Upper lobe of right lung (tissue), 1 donor: ENCODE measurements at regions of chr12 and their contacts with region 1.

Region 1: GRCh38 chr12:69254046-69254445 is 14.7 kb downstream of the CPSF6 start:
- DNase-seq: no peak
- ATAC-seq: peak; percentile 89
- H3K4me3 ChIP-seq: no peak overlapping the region
- H3K27ac ChIP-seq: no peak overlapping the region
- H3K4me1 ChIP-seq: peaks cover 7% of the 10 kb centered on the region
- H3K27me3 ChIP-seq: no peaks in the 10 kb centered on the region
- CTCF ChIP-seq: peak; percentile 71

Region 2: DNA sequence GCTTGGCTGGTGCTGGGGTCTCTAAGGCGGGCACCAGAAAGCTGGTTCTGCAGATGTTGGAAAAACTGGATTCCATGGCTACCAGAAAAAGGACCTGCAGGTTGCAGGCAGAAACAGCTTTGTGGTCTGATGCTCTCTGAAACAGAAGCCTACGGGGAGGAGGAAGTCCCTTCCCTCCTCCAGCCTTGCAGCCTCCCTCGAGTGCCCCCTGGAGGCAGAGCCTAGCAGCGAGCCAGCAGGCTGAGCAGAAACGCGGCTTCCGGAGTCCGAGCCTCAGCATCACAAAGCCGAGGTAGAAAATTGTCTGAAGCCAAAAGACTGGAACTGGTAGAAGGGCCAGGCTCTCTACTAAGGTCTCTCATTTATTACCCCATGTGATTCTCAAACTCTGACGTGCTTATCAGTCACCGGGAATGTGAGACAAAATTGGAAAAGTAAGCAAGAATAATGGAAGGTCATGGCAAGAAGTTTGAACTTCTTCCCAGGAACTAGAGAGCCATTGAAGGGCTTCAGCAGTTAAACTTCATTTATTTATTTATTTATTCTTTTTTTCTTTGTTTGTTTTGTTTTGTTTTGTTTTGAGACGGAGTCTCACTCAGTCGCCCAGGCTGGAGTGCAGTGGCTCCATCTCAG is 96.9 kb before region 1 on chr12:
- intact Hi-C with region 1: loop called (anchors 5 kb)
- DNase-seq: peak; percentile 94
- ATAC-seq: peak; percentile 99
- H3K4me3 ChIP-seq: no peak overlapping the region
- H3K27ac ChIP-seq: no peak overlapping the region
- H3K4me1 ChIP-seq: peaks cover 10% of the 10 kb centered on the region
- H3K27me3 ChIP-seq: no peaks in the 10 kb centered on the region
- CTCF ChIP-seq: peak; percentile 93

Region 3: GRCh38 chr12:69708649-69709048 is 454.6 kb after region 1 on chr12:
- intact Hi-C with region 1: no loop called
- DNase-seq: no peak
- ATAC-seq: no peak
- H3K4me3 ChIP-seq: no peak overlapping the region
- H3K27ac ChIP-seq: no peak overlapping the region
- H3K4me1 ChIP-seq: no peaks in the 10 kb centered on the region
- H3K27me3 ChIP-seq: no peaks in the 10 kb centered on the region
- CTCF ChIP-seq: no peak